ENCODE measurements at regions of chr1 and their contacts with region 1.

Region 1: GRCh38 chr1:82879701-82880305 is 1079.1 kb downstream of the ADGRL2 start:
- H3K4me3 Mint-ChIP-seq: no peak overlapping the region
- H3K27ac Mint-ChIP-seq: no peak overlapping the region
- H3K4me1 Mint-ChIP-seq: no peaks in the 10 kb centered on the region
- H3K27me3 Mint-ChIP-seq: no peaks in the 10 kb centered on the region

Region 2: GRCh38 chr1:82819234-82819633 is 60.6 kb before region 1 on chr1:
- intact Hi-C with region 1: loop called (anchors 10 kb)
- H3K4me3 Mint-ChIP-seq: no peak overlapping the region
- H3K27ac Mint-ChIP-seq: no peak overlapping the region
- H3K4me1 Mint-ChIP-seq: no peaks in the 10 kb centered on the region
- H3K27me3 Mint-ChIP-seq: no peaks in the 10 kb centered on the region

Region 3: GRCh38 chr1:82837766-82838465 is 41.9 kb before region 1 on chr1:
- intact Hi-C with region 1: no loop called
- H3K4me3 Mint-ChIP-seq: no peak overlapping the region
- H3K27ac Mint-ChIP-seq: no peak overlapping the region
- H3K4me1 Mint-ChIP-seq: no peaks in the 10 kb centered on the region
- H3K27me3 Mint-ChIP-seq: no peaks in the 10 kb centered on the region

Region 4: DNA sequence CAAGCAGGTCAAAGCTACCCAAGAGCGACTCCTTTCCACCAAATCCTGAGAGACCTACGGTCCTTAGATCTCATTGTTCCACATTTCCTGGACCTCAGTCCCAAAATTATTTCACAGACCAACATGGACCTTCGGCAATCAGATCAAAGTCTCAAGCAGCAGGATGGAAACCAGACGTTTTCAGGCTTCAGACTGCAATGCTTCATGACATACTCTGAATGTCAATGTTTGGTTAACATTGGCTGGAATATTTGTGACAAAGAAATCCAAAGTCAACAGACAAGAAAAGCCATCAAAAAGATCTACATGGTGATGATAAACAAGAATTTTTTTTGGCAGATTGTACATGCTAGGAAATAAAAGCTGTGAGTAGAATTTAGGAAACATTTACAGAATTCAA is 21.8 kb before region 1 on chr1:
- intact Hi-C with region 1: no loop called
- H3K4me3 Mint-ChIP-seq: no peak overlapping the region
- H3K27ac Mint-ChIP-seq: no peak overlapping the region
- H3K4me1 Mint-ChIP-seq: no peaks in the 10 kb centered on the region
- H3K27me3 Mint-ChIP-seq: no peaks in the 10 kb centered on the region